PC-9 (cell line): ENCODE measurements at regions of chr17 and their contacts with region 1.

Region 1: GRCh38 chr17:7261172-7261927 is 928 bp downstream of the CLDN7 start:
- DNase-seq: peak; percentile 74 to 91
- H3K4me3 ChIP-seq: peak overlapping the region; percentile 97
- H3K27ac ChIP-seq: peak overlapping the region; percentile 100
- H3K4me1 ChIP-seq: peaks cover 40% of the 10 kb centered on the region
- H3K27me3 ChIP-seq: no peaks in the 10 kb centered on the region
- CTCF ChIP-seq: no peak; the same call in 1 of the 2 replicates

Region 2: DNA sequence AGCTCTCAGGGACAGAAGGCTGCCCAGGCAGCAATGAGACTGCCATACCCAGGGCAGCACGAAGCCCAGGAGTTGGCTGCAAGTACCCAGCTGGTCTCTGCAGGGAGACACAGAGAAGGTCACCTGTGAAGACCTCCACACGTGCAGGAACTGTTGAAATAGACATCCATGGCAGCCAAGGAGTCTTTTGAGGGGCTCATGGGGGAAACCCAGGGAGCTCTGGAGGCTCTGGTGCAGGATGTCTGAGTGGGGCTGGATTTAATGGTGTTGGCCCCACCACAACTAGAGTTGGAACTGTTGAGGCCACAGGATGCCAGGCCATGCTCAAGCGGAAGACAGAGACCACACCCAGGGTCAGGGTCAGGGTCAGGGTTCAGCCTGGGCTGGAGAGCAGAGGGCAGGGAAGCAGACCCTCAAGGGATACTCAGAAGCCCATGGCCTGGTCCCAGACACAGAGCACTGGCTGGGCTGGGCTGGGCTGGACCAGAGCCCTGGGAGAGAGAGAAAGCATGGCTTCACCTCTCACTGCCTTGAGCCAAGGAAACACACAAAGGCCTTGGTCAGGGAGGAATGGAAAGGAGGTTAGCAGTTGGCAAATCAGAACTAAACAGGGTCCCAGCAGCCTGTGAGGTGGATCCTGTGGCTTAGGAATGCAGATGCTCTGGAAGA is 726.4 kb before region 1 on chr17:
- CTCF ChIA-PET with region 1: no interaction called
- POLR2A ChIA-PET with region 1: no interaction called
- intact Hi-C with region 1: no loop called
- DNase-seq: no peak
- H3K4me3 ChIP-seq: no peak overlapping the region
- H3K27ac ChIP-seq: no peak overlapping the region
- H3K4me1 ChIP-seq: no peaks in the 10 kb centered on the region
- H3K27me3 ChIP-seq: no peaks in the 10 kb centered on the region
- CTCF ChIP-seq: no peak

Region 3: DNA sequence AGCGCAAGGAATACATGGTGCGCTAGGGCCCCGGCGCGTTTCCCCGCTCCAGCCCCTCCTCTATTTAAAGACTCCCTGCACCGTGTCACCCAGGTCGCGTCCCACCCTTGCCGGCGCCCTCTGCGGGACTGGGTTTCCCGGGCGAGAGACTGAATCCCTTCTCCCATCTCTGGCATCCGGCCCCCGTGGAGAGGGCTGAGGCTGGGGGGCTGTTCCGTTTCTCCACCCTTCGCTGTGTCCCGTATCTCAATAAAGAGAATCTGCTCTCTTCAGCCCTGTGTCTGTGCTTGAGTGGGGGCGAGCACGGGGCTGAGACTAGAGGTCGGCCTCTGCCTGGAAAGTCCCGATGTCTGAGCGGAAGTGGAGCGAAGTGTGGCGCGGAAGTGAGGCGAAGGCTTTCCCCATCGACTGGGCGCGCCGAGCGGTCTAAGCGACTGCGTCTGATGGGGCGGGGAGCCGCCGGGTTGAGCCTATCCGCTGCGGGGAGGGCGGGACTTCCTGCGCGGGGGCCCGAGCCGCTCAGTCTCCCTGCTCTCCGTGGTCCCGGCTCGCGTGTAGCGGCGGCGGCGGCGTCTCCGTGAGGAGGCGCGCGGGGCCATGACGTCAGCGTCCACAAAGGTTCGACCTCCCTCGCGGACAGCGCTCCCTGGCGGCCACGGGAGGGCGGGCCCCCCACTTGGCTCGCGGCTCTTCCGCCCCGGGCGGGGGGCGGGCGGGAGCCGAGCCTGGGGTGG is 246.9 kb before region 1 on chr17:
- CTCF ChIA-PET with region 1: interaction called, 13 read pairs
- POLR2A ChIA-PET with region 1: no interaction called
- intact Hi-C with region 1: no loop called
- DNase-seq: peak; percentile 91 to 99
- H3K4me3 ChIP-seq: peak overlapping the region; percentile 97
- H3K27ac ChIP-seq: peak overlapping the region; percentile 81
- H3K4me1 ChIP-seq: peaks cover 21% of the 10 kb centered on the region
- H3K27me3 ChIP-seq: no peaks in the 10 kb centered on the region
- CTCF ChIP-seq: peak; percentile 72

Region 4: DNA sequence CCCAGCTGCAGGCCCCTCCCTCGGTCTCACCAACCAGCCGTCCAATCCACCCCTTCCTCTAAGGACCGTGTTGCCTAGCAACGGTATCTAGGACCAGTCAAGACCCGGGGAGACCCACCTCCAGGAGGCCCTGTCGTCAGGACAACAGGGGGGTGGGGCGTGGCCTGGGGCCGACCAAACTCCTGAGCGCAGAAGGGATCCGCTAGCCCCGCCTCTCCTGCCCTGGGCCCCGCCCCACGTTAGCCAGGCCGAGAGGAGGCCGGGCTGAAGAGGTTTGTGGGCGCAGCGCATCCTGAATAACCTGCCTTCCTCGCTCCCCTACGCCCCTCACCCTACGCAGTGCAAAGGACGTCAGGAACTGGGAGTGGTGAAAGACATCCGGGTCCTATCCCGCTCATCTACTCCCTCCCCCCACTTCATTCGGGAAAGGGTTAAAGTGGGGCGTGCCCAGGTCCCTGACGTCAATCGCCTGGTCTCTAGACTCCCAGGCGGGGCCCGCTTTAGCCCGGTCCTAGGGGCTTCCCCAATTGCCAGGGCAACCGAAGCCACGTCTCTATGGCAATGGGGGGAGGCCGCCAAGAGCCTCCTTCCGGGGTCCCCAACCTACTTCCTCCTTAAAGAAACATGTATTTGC is 56.4 kb before region 1 on chr17:
- CTCF ChIA-PET with region 1: no interaction called
- POLR2A ChIA-PET with region 1: no interaction called
- intact Hi-C with region 1: no loop called
- DNase-seq: peak in 1 of 2 experiments; percentile 41
- H3K4me3 ChIP-seq: no peak overlapping the region
- H3K27ac ChIP-seq: no peak overlapping the region
- H3K4me1 ChIP-seq: no peaks in the 10 kb centered on the region
- H3K27me3 ChIP-seq: no peaks in the 10 kb centered on the region
- CTCF ChIP-seq: no peak

Region 5: GRCh38 chr17:7239091-7240027 is 22.0 kb before region 1 on chr17 and contains the start of gene PHF23:
- CTCF ChIA-PET with region 1: interaction called, 3 read pairs
- POLR2A ChIA-PET with region 1: interaction called, 7 read pairs
- intact Hi-C with region 1: loop called (anchors 1 kb)
- DNase-seq: peak; percentile 96 to 99
- H3K4me3 ChIP-seq: peak within 1 kb of the TSS; percentile 93
- H3K27ac ChIP-seq: peak within 1 kb of the TSS; percentile 80
- H3K4me1 ChIP-seq: peaks cover 38% of the 10 kb centered on the region
- H3K27me3 ChIP-seq: no peaks in the 10 kb centered on the region
- CTCF ChIP-seq: no peak
- total RNA-seq, gene PHF23: 64.5 and 65.8 TPM in 2 replicates

Region 6: DNA sequence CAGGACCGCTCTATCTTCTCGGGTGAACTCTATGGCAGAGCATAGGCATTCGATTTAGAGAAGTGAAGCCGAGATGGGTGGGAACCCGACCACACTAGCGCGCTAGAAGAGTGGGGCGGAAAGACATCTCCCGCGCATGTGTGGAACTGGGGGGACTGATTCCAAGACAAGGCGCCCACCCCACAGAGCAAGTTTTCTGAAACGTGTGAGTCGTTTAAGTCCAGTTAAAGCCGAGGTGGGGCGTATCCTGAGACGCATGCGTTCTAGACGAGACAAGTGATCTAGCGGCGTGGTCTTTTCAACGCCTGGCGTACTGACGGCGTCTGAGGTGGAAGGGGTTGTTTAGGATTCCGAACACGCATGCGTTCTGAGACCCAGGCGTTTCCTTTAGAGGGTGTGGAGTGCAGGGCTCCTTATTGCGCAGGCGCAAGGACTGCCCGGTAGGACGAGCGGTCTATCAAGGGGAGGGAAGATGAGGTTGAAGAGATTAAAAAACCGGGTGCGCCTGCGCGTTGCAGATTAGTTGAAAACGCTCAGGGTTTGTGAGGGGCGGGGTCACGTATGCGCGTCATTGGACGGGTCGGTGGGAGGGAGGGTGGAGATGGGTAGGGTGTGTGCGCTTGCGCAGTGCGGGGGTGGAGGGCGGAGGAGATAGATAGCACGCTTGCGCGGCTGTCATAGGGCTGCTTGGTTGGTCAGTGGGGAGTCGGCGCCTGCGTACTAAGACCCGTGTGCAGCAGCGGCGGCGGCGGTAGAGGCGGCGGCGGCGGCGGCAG is 45.7 kb after region 1 on chr17 and contains the start of gene EIF5A:
- CTCF ChIA-PET with region 1: no interaction called
- POLR2A ChIA-PET with region 1: no interaction called
- intact Hi-C with region 1: loop called (anchors 5 kb)
- DNase-seq: peak; percentile 99
- H3K4me3 ChIP-seq: peak within 1 kb of the TSS; percentile 86
- H3K27ac ChIP-seq: peak within 1 kb of the TSS; percentile 96
- H3K4me1 ChIP-seq: peaks cover 26% of the 10 kb centered on the region
- H3K27me3 ChIP-seq: no peaks in the 10 kb centered on the region
- CTCF ChIP-seq: no peak
- total RNA-seq, gene EIF5A: 806 and 1,298 TPM in 2 replicates

Region 7: DNA sequence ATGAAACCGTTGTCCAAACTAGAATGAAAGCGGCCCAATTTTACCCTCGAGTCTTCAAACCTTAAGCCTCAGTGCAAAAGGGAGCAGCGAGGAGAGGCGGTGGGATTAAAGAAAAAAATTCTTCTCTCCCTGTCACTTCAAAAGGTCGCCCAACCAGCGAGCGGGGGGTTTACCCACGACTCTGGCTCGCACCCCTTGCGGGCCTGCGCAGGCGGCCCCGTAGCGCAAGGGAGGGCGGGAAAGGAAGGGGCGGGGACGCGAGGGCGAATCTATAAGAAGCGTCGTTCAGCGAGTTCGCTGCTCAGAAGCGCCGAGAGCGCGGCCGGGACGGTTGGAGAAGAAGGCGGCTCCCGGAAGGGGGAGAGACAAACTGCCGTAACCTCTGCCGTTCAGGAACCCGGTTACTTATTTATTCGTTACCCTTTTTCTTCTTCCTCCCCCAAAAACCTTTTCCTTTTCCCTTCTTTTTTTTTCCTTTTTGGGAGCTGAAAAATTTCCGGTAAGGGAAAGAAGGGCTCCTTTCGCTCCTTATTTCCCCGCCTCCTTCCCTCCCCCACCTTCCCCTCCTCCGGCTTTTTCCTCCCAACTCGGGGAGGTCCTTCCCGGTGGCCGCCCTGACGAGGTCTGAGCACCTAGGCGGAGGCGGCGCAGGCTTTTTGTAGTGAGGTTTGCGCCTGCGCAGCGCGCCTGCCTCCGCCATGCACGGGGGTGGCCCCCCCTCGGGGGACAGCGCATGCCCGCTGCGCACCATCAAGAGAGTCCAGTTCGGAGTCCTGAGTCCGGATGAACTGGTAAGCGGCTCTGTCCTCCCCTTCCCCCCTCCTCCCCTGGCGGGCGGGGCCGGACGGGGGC is 222.9 kb after region 1 on chr17 and contains the start of gene POLR2A:
- CTCF ChIA-PET with region 1: no interaction called
- POLR2A ChIA-PET with region 1: no interaction called
- intact Hi-C with region 1: loop called (anchors 5 kb)
- DNase-seq: peak; percentile 79 to 99
- H3K4me3 ChIP-seq: peak within 1 kb of the TSS; percentile 88
- H3K27ac ChIP-seq: peak within 1 kb of the TSS; percentile 95
- H3K4me1 ChIP-seq: peaks cover 18% of the 10 kb centered on the region
- H3K27me3 ChIP-seq: no peaks in the 10 kb centered on the region
- CTCF ChIP-seq: no peak
- total RNA-seq, gene POLR2A: 149 and 166 TPM in 2 replicates

Region 8: DNA sequence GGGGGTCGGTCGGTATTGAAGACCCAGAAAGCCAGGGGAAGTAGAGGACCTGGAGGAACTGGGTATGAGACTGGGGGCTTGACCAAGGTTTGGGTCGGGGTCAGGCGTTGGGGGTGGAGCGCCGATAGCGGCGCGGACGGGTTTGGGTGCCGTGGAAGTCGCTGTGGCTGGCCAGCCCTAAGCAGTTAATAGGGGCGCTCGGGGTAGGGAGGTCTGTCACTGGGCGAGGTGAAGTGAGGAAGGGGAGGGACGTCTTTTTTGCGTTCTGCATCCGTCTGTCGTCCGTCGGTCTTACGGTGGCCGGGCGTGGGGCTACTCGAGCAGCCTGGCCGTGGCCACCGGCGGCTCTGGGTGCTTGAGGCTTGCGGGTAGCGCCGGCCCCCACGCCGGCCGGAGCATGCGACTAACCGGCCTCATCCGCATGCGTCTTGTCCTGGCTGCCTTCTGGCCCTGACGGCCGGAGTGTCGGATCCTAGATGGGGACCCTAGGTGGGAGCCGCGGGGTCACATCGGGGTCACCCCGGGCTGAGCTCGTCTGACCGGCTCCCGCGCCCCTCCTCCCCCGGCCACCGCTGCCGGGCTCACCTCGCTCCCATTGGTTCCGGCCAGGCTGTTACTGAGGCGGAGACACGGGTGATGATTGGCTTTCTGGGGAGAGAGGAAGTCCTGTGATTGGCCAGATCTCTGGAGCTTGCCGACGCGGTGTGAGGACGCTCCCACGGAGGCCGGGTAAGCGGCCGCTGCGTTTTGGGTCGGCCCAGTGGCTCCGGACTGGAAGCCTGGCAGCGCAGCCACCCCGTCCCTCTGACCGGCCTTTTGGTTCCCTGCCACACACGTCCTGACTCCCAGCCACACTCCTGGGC is 583.2 kb after region 1 on chr17:
- CTCF ChIA-PET with region 1: no interaction called
- POLR2A ChIA-PET with region 1: no interaction called
- intact Hi-C with region 1: loop called (anchors 5 kb)
- DNase-seq: peak; percentile 78 to 93
- H3K4me3 ChIP-seq: peak overlapping the region; percentile 93
- H3K27ac ChIP-seq: peak overlapping the region; percentile 92
- H3K4me1 ChIP-seq: peaks cover 10% of the 10 kb centered on the region
- H3K27me3 ChIP-seq: no peaks in the 10 kb centered on the region
- CTCF ChIP-seq: no peak